HepG2 (cell line): ENCODE measurements at regions of chr12 and their contacts with region 1.

Region 1: DNA sequence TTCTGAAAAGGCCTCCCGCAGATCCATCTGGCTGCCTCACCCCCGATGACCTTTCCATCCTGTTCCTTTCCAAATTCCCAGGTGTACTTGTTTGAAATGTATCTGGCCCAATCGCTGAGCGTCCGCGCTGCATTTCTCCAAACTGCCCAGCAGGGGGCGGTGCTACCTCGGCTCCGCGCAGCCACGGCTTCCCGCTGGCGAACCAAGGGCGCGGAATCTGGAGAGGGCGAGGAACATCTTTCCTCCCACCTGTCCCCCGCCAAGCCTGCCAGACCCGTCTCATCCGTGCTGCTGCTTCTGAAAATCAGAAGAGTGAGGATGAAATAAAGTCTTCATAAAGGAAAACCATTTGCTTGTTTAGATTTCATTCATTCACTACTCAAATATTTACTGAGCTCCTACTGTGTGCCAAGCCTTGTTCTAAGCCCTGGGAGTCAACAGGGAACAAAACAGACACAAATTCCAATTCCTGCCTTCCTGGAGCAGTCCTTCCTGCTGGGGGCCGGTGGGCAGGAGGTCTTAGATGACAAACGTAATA is 16.8 kb upstream of the MYL2 start:
- DNase-seq: peak; percentile 9
- ATAC-seq: peak; percentile 75
- H3K4me3 ChIP-seq: no peak overlapping the region
- H3K27ac ChIP-seq: no peak overlapping the region
- H3K4me1 ChIP-seq: no peaks in the 10 kb centered on the region
- H3K27me3 ChIP-seq: no peaks in the 10 kb centered on the region; a peak in 3 of 5 replicates
- CTCF ChIP-seq: peak; percentile 90
- EP300 ChIP-seq: no peak
- POLR2A ChIP-seq: no peak
- RAD21 ChIP-seq: peak; percentile 72

Region 2: GRCh38 chr12:111298582-111299436 is 361.6 kb after region 1 on chr12:
- CTCF ChIA-PET with region 1: interaction called, 4 read pairs
- POLR2A ChIA-PET with region 1: no interaction called
- in situ Hi-C with region 1: no loop called
- intact Hi-C with region 1: loop called (anchors 5 kb)
- DNase-seq: peak; percentile 41
- ATAC-seq: peak; percentile 91
- H3K4me3 ChIP-seq: no peak overlapping the region
- H3K27ac ChIP-seq: no peak overlapping the region
- H3K4me1 ChIP-seq: no peaks in the 10 kb centered on the region
- H3K27me3 ChIP-seq: peaks cover 0 to 4% of the 10 kb centered on the region in 2 experiments; a peak in 1 of 5 replicates
- CTCF ChIP-seq: peak; percentile 85
- EP300 ChIP-seq: no peak
- POLR2A ChIP-seq: no peak
- RAD21 ChIP-seq: no peak; the same call in 1 of the 2 replicates

Region 3: GRCh38 chr12:111313833-111314259 is 376.7 kb after region 1 on chr12:
- CTCF ChIA-PET with region 1: no interaction called
- POLR2A ChIA-PET with region 1: no interaction called
- in situ Hi-C with region 1: loop called (anchors 10 kb)
- intact Hi-C with region 1: loop called (anchors 5 kb)
- DNase-seq: peak; percentile 59
- ATAC-seq: peak; percentile 88
- H3K4me3 ChIP-seq: no peak overlapping the region
- H3K27ac ChIP-seq: no peak overlapping the region
- H3K4me1 ChIP-seq: no peaks in the 10 kb centered on the region
- H3K27me3 ChIP-seq: peaks cover 2 to 11% of the 10 kb centered on the region in 2 experiments; a peak in 3 of 5 replicates
- CTCF ChIP-seq: peak; percentile 91
- EP300 ChIP-seq: no peak
- POLR2A ChIP-seq: no peak
- RAD21 ChIP-seq: peak; percentile 75